HEK293 (cell line): ENCODE measurements at regions of chr19 and their contacts with region 1.

Region 1: DNA sequence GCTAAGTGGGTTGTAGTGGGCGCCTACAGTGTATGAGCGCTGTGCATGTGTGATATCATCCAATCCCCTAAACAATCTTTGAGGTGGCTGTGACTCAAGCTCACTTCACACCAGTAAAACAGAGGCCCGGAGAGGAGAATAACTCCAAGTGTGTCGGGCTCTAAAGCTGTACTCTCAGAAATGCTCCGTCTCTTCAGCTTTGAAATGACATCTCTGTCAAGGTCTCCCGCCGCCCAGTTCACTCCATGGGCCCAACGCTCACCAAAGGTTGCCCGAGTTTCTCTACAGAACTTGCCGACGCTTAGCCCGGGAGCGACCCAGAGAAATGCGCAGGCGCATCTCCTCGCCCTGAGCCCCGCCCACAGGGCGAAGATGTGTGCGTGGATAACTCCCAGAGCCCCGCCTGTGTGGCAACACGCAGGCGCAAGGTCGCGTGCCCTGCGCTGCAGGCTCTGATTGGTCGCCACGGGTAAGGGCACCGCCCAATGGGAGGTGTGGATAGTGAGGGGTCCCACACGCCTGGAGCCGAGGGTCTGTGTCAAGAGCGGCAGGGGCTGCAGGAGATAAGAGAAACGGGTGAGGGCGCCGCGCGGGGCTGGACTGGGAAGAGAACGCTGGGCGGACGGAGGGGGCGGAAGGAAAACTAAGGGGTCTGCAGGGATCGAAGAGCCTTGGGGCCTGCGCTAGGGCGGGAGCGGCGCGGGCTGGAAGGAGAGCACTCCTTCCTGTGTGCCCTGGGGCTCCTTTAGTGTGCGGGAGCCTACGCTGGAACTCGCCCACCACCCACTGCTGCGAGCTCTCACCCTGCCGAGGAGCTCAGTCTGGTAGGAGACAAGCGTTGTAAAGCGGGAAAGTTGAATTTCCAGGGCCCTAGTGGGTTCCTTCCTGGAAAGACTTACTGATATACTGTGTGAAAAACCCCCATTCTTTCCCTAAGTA is at the start of gene ZNF526:
- H3K4me3 ChIP-seq: peak within 1 kb of the TSS; percentile 87
- H3K27ac ChIP-seq: peak within 1 kb of the TSS; percentile 89
- H3K4me1 ChIP-seq: peaks cover 23% of the 10 kb centered on the region
- CTCF ChIP-seq: peak; percentile 93

Region 2: DNA sequence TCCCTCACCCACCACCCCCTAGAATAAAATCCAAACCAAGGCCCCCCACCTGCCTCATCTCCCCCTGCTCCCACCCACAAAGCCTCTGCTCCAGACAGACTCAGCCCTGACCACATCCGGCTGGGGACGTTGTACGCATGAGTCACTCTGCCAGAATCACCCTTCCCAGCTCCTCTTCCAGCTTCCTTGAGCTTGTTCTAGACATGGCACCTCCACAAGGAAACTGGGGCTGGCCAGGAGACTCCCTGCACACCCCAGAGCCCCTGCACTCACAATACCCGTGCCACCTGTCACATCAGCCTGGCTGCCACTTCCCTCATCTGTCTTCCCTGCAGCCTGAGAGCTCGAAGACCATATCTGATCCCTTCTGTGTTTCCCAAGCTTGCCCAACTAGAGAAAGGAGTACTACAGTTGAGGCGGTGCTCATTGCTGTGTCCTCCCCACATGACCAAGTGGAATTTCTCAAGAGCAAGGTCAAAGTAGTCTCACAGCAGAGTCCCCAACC is 12.3 kb before region 1 on chr19:
- CTCF ChIA-PET with region 1: interaction called, 7 read pairs
- POLR2A ChIA-PET with region 1: interaction called, 20 read pairs
- H3K4me3 ChIP-seq: no peak overlapping the region
- H3K27ac ChIP-seq: no peak overlapping the region
- H3K4me1 ChIP-seq: no peaks in the 10 kb centered on the region
- CTCF ChIP-seq: no peak